ENCODE measurements at regions of chr12 and their contacts with region 1.

Region 1: GRCh38 chr12:123253658-123254459 is 17.8 kb downstream of the CDK2AP1 start:
- DNase-seq: no peak
- ATAC-seq: no peak
- H3K4me3 ChIP-seq: no peak overlapping the region
- H3K27ac ChIP-seq: no peak overlapping the region
- H3K4me1 ChIP-seq: peaks cover 1% of the 10 kb centered on the region; the same call in 1 of the 2 replicates
- H3K27me3 ChIP-seq: no peaks in the 10 kb centered on the region
- CTCF ChIP-seq: no peak
- POLR2A ChIP-seq: no peak
- RAD21 ChIP-seq: no peak

Region 2: DNA sequence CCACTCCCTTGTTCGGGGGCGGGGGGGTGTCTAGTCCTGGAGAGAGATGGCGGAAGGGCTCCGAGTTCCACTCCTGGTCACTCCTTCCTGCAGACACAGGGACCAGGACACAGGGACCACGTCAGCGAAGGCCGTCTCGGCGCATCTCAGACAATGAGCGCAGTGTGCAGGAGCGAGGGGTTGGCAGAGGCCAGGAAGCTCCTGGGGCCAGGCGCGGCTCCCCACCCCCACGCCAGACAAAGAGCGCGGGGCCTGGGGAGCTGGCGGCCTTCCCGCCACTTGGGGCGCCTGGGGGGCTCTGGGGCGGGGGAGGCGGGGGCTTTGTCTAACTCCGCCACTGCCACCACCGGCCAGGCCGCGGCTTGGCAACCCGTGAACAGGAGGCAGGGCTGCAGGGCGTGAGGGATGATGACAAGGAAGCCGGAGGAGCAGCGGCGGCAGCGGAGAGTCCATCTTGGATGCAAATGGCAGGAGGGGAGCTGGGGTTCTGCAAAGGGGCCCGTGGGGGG is 15.6 kb after region 1 on chr12:
- CTCF ChIA-PET with region 1: no interaction called
- POLR2A ChIA-PET with region 1: interaction called, 10 read pairs
- dilution Hi-C with region 1: no loop called
- in situ Hi-C with region 1: no loop called
- intact Hi-C with region 1: no loop called
- DNase-seq: peak; percentile 61
- ATAC-seq: peak; percentile 31
- H3K4me3 ChIP-seq: peak overlapping the region; percentile 74
- H3K27ac ChIP-seq: peak overlapping the region; percentile 85
- H3K4me1 ChIP-seq: peaks cover 17% of the 10 kb centered on the region
- H3K27me3 ChIP-seq: no peaks in the 10 kb centered on the region
- CTCF ChIP-seq: 0 out of 2 replicates have a peak, but pooled peaks have one; percentile 7
- POLR2A ChIP-seq: peak; percentile 21; the same call in 1 of the 2 replicates
- RAD21 ChIP-seq: no peak